ENCODE measurements at regions of chr7 and their contacts with region 1.

Region 1: DNA sequence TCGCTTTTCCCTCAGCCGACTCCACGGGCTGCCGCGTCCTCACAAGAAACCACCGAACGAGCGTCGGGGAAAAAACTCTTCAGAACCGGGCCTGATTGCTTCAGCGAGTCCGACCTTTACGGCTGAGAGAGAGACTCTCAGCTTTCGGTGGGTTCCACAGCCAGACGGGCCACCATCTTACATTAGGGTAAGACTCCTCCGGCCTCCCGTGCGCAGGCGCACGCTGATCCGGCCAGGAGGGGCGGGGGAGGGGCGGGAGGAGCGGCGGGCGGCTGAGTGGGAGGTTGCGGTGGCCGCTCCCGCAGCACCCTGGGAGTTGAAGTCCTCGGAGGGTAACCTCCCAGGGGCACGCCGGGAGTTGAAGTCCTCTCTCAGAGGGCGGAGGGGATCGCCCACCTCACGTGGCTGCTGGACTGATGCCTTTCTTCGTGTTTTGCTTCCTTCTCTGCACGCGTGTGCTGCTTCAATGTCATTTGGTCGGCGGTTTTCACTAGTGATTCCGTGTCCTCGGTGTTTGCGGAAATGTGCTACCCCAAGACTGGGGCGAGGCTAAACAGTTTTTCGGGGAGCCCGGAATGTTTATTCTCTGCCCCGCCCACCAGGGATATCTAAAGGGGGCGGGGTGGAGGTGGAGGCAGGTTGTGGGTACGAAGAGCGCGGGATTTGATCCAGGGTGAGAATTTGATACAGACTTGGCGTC is at the start of gene CNOT4:
- DNase-seq: peak; percentile 94 to 98 (median 97)
- ATAC-seq: peak; percentile 94
- H3K4me3 ChIP-seq: peak within 1 kb of the TSS; percentile 80 to 84
- H3K4me3 Mint-ChIP-seq: no peak within 1 kb of the TSS
- H3K27ac ChIP-seq: peak within 1 kb of the TSS; percentile 78 to 95
- H3K27ac Mint-ChIP-seq: no peak within 1 kb of the TSS
- H3K4me1 ChIP-seq: peaks cover 26% of the 10 kb centered on the region
- H3K4me1 Mint-ChIP-seq: peaks cover 14% of the 10 kb centered on the region
- H3K27me3 ChIP-seq: no peaks in the 10 kb centered on the region
- H3K27me3 Mint-ChIP-seq: no peaks in the 10 kb centered on the region
- CTCF ChIP-seq: no peak
- total RNA-seq, gene CNOT4: 24.8 to 25.9 TPM

Region 2: DNA sequence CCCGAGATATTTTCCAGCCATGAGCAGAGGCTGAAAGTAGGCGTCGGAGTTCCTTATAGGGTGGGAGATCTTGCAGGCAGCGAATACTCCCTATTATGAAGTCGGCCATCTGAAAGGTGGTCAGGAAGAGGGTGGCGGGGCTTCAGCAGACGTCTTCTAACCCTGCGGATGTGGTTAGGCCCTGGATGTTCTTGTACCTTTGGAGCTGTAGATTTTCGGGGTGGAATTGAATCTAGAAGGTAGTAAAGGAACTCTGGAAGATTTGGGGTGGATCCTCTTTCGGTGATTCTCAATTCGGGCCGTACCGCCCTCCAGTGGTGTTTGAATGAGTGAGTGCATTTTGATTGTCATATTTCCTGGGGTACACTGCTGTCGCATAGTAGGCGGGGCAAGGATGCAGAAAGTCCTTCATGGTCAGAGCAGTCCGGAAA is 48.3 kb after region 1 on chr7:
- CTCF ChIA-PET with region 1: no interaction called
- POLR2A ChIA-PET with region 1: no interaction called
- intact Hi-C with region 1: loop called (anchors 1 kb)
- DNase-seq: peak; percentile 37 to 87 (median 68)
- ATAC-seq: peak; percentile 52
- H3K4me3 ChIP-seq: peak overlapping the region; percentile 85 to 86
- H3K4me3 Mint-ChIP-seq: no peak overlapping the region
- H3K27ac ChIP-seq: peak overlapping the region; percentile 90 to 98
- H3K27ac Mint-ChIP-seq: no peak overlapping the region
- H3K4me1 ChIP-seq: peaks cover 16% of the 10 kb centered on the region
- H3K4me1 Mint-ChIP-seq: peaks cover 17% of the 10 kb centered on the region
- H3K27me3 ChIP-seq: no peaks in the 10 kb centered on the region
- H3K27me3 Mint-ChIP-seq: no peaks in the 10 kb centered on the region
- CTCF ChIP-seq: peak; percentile 52

Region 3: DNA sequence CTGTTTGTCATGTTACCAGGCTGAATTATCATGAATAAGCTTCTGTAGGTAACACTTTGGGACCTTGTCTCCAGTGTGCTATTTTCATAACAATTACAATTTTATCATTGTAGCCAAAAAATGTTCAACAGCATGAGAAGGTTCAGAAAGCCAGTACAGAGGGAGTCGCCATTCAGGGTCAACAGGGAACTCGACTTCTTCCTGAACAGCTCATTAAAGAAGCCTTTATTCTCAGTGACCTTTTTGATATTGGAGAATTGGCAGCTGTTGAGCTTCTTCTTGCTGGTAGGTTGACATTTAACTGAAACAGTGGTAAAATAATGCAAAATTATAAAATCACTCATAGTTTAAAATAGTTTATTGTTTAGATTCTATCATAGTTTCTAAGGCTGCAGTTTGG is 63.5 kb after region 1 on chr7:
- CTCF ChIA-PET with region 1: interaction called, 3 read pairs
- POLR2A ChIA-PET with region 1: interaction called, 3 read pairs
- intact Hi-C with region 1: loop called in 1 of 2 experiments (anchors 5 kb)
- DNase-seq: no peak
- ATAC-seq: no peak
- H3K4me3 ChIP-seq: no peak overlapping the region
- H3K4me3 Mint-ChIP-seq: no peak overlapping the region
- H3K27ac ChIP-seq: no peak overlapping the region
- H3K27ac Mint-ChIP-seq: no peak overlapping the region
- H3K4me1 ChIP-seq: no peaks in the 10 kb centered on the region
- H3K4me1 Mint-ChIP-seq: peaks cover 16% of the 10 kb centered on the region
- H3K27me3 ChIP-seq: no peaks in the 10 kb centered on the region
- H3K27me3 Mint-ChIP-seq: no peaks in the 10 kb centered on the region
- CTCF ChIP-seq: no peak

Region 4: DNA sequence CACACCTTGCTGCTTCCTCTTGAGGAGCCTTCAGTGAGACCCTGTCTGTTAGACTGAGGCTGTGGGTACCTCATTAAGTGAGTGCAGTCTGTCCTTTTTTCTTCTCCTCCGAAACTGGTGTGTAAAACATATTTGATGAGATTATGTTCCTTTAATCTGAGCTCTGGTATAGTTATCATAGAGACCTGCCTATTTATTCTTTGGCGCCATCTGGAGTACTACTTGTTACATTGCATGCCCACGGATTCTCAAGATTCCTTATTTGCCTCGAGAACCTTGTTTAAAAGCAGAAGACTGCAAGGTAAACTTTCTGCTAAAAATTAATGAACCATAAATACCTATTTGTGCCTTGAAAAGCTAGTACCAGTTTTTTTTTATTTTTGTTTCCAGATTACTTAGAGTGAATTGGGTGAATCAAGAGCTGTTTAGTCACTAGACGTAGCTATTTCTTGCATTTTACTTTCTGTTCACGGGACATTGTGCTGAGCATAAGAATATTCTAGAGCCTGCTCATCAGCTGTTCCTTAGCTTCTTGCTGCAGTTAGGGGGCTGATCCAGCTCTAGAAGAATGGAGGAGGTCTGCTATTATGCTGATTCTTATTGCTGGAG is 135.3 kb after region 1 on chr7:
- CTCF ChIA-PET with region 1: interaction called, 5 read pairs
- POLR2A ChIA-PET with region 1: no interaction called
- intact Hi-C with region 1: loop called in 1 of 2 experiments (anchors 5 kb)
- DNase-seq: peak in 3 of 9 experiments; percentile 21 to 59 (median 52)
- ATAC-seq: peak; percentile 83
- H3K4me3 ChIP-seq: no peak overlapping the region
- H3K4me3 Mint-ChIP-seq: no peak overlapping the region
- H3K27ac ChIP-seq: no peak overlapping the region
- H3K27ac Mint-ChIP-seq: no peak overlapping the region
- H3K4me1 ChIP-seq: no peaks in the 10 kb centered on the region
- H3K4me1 Mint-ChIP-seq: no peaks in the 10 kb centered on the region
- H3K27me3 ChIP-seq: no peaks in the 10 kb centered on the region
- H3K27me3 Mint-ChIP-seq: no peaks in the 10 kb centered on the region
- CTCF ChIP-seq: peak; percentile 79

Region 5: DNA sequence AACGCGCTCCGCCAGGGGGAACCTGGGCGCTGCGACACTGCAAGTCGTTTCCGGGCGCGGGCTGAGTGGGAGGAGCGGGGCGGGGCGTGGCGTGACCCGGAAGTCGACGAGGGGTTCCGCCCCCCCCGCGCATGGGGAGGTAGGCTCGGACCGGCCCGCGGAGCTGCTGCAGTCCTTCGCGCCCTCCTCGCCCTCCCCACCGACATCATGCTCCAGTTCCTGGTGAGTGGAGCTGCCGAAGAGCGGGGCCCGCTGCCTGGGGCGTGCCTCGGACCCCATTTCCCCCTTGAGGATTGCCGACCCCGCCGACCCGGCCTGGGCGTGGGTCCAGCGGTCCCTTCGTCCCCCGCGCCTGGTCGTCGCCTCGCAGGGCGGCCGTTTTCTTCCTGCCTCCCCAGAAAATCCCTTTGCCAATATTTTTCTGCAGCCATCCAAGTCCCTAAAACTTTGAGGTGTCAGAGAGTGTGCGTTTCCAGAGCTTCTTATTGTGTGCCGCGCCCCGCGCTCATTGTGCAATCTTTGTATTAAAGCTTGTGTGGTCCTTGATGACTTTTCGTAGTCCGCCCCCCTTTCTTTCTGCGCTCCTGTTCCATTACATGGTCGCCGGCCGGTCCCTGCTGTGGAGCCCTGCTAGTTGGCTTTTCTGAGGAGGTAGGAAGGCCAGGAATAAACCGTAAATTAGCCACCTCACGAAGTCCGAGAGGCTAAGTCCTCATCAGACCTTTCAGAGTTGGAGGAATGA is 152.5 kb after region 1 on chr7 and contains the start of gene STMP1:
- CTCF ChIA-PET with region 1: no interaction called
- POLR2A ChIA-PET with region 1: no interaction called
- intact Hi-C with region 1: loop called (anchors 1 kb)
- DNase-seq: peak; percentile 91 to 99 (median 96)
- ATAC-seq: peak; percentile 99
- H3K4me3 ChIP-seq: peak within 1 kb of the TSS; percentile 72 to 76
- H3K4me3 Mint-ChIP-seq: peak within 1 kb of the TSS; percentile 90
- H3K27ac ChIP-seq: peak within 1 kb of the TSS; percentile 53 to 65
- H3K27ac Mint-ChIP-seq: peak within 1 kb of the TSS; percentile 88
- H3K4me1 ChIP-seq: peaks cover 20% of the 10 kb centered on the region
- H3K4me1 Mint-ChIP-seq: peaks cover 41% of the 10 kb centered on the region
- H3K27me3 ChIP-seq: no peaks in the 10 kb centered on the region
- H3K27me3 Mint-ChIP-seq: no peaks in the 10 kb centered on the region
- CTCF ChIP-seq: peak; percentile 64
- total RNA-seq, gene STMP1: 9.4 to 11.5 TPM

Region 6: GRCh38 chr7:135714534-135715009 is 204.5 kb after region 1 on chr7:
- CTCF ChIA-PET with region 1: no interaction called
- POLR2A ChIA-PET with region 1: no interaction called
- intact Hi-C with region 1: no loop called
- DNase-seq: no peak
- ATAC-seq: no peak
- H3K4me3 ChIP-seq: no peak overlapping the region
- H3K4me3 Mint-ChIP-seq: no peak overlapping the region
- H3K27ac ChIP-seq: no peak overlapping the region
- H3K27ac Mint-ChIP-seq: no peak overlapping the region
- H3K4me1 ChIP-seq: no peaks in the 10 kb centered on the region
- H3K4me1 Mint-ChIP-seq: no peaks in the 10 kb centered on the region
- H3K27me3 ChIP-seq: no peaks in the 10 kb centered on the region
- H3K27me3 Mint-ChIP-seq: peaks cover 4% of the 10 kb centered on the region
- CTCF ChIP-seq: no peak

Region 7: DNA sequence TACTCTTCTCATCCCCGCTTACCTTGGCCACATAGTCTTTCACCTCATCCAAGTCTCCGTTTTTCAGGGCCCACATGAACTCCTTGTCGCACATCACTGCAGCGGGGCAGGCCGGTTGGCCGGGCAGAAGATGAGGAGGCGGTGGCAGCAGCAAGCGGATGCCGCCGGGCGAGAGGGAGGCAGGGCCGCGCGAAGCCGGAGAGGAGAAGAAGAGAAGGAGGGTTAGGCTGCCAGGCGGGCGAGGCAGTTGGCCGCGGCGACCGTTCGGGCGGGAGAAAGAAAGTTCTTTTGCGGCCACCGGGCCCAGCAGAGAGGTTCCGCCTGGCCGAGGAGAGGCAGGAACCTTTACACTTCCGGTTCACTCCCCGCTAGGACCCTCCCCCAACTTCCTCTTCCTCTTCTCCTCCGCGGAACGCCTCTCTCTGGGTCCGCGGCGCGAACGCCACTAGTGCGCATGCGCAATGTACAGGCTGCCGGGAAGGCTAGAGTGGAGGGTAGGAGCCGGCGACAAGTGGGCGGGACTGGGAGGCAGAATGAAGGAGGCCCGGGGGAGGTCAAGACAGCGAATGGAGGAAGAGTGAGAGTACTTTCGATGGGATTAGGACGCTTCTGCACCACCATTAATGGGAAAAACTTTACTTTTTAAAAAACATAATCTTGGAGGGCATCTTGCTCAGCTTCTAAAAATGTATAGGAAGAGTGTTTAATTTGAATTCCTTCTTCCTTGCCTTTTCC is 467.1 kb after region 1 on chr7 and contains the start of gene MTPN:
- CTCF ChIA-PET with region 1: no interaction called
- POLR2A ChIA-PET with region 1: no interaction called
- intact Hi-C with region 1: loop called (anchors 1 to 2 kb)
- DNase-seq: peak; percentile 94 to 98 (median 98)
- ATAC-seq: peak; percentile 81
- H3K4me3 ChIP-seq: peak within 1 kb of the TSS; percentile 89 to 93
- H3K4me3 Mint-ChIP-seq: peak within 1 kb of the TSS; percentile 92
- H3K27ac ChIP-seq: peak within 1 kb of the TSS; percentile 82 to 88
- H3K27ac Mint-ChIP-seq: peak within 1 kb of the TSS; percentile 93
- H3K4me1 ChIP-seq: peaks cover 71% of the 10 kb centered on the region
- H3K4me1 Mint-ChIP-seq: peaks cover 79% of the 10 kb centered on the region
- H3K27me3 ChIP-seq: no peaks in the 10 kb centered on the region
- H3K27me3 Mint-ChIP-seq: no peaks in the 10 kb centered on the region
- CTCF ChIP-seq: no peak
- total RNA-seq, gene MTPN: 91.9 to 101 TPM